SK-N-SH (cell line): ENCODE measurements at regions of chr1 and their contacts with region 1.

Region 1: DNA sequence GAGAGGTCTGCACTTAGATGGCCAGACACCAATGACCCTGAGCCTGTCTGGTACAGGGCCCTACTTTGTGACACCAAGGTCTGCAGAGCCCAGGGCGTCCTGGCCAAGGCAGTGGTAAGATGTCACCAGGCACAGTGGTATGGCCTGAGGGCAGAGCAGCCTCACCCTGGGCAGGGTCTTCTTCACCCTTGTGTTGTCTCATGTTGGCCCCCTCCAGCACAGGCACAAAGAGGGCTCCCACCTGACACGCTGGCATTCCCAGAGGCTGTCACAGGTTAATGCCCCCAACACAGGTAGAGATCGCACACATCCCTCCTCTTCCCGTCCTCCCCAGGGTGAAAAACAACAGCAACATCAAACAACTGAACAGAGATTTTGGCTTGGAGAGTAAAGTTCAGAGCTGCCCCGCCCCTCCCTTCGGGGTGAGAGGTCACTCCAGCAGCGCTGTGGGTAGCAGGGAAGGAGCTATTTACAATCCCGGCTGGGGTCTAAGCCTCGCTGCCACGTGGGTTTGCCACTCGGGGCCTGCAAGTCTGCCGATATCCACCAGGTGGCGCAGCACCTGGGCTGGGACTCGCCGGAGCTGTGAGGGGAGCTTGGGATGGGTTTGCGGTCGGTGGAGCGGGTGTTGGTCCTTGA is 12.6 kb downstream of the EFNA3 start:
- DNase-seq: peak; percentile 88
- H3K4me3 ChIP-seq: peak overlapping the region in 1 of 2 experiments; percentile 23; a peak in 1 of 4 replicates
- H3K27ac ChIP-seq: no peak overlapping the region
- H3K4me1 ChIP-seq: peaks cover 0 to 30% of the 10 kb centered on the region in 2 experiments; a peak in 1 of 4 replicates
- H3K27me3 ChIP-seq: no peaks in the 10 kb centered on the region
- CTCF ChIP-seq: peak; percentile 91
- EP300 ChIP-seq: no peak
- RAD21 ChIP-seq: peak; percentile 78

Region 2: GRCh38 chr1:155044812-155045690 is 46.1 kb before region 1 on chr1:
- CTCF ChIA-PET with region 1: interaction called, 129 read pairs
- POLR2A ChIA-PET with region 1: no interaction called
- DNase-seq: peak; percentile 84
- H3K4me3 ChIP-seq: no peak overlapping the region
- H3K27ac ChIP-seq: no peak overlapping the region; a peak in 1 of 4 replicates
- H3K4me1 ChIP-seq: peaks cover 11 to 27% of the 10 kb centered on the region in 2 experiments; a peak in 3 of 4 replicates
- H3K27me3 ChIP-seq: no peaks in the 10 kb centered on the region
- CTCF ChIP-seq: peak; percentile 81
- EP300 ChIP-seq: no peak
- RAD21 ChIP-seq: peak; percentile 84

Region 3: DNA sequence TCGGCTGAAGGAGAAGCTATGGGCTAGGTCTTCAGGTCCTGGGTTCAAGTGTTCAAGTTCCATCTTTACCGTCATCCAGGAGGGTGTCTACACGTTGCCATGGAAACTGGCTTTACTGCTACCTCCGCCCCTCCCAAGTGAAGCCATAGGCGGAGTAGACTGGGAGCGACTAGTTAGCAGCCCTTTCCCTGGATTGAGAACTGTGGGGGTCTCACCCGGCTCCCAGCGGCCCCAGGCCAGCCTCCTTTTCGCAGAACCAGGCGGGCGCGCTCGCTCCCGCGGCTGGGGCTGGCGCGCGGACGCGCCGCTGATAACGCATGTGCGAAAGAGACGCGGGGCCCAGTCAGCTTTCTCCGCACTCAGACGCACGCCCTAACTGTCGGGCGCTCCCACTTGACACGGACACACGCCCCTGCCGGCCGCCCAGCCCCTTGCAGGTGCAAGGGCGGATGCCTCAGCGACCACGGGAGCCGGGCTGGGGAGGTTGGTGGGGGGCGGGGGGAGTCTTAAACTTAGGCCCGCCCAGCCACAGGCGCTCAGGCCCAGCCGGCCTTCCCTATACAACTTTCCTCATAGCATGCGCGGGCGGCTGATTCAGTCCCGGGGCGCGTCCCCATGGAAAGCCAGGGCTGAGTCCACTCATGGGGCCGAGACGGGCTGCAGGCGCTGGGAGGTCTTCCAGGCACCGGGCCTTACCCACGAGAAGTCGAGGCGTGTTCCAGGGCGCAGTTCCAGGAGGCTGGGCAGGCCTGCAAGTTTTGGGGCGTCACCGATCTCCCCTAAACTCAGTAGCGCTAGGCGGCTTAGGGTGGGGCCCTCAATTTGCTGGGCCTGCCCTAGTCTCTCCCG is 20.2 kb before region 1 on chr1:
- CTCF ChIA-PET with region 1: interaction called, 44 read pairs
- POLR2A ChIA-PET with region 1: interaction called, 3 read pairs
- DNase-seq: peak; percentile 90
- H3K4me3 ChIP-seq: peak overlapping the region in 1 of 2 experiments; percentile 32; a peak in 2 of 4 replicates
- H3K27ac ChIP-seq: peak overlapping the region in 1 of 2 experiments; percentile 51; a peak in 1 of 4 replicates
- H3K4me1 ChIP-seq: peaks cover 0 to 21% of the 10 kb centered on the region in 2 experiments; a peak in 1 of 4 replicates
- H3K27me3 ChIP-seq: no peaks in the 10 kb centered on the region
- CTCF ChIP-seq: peak; percentile 25; the same call in 1 of the 2 replicates
- EP300 ChIP-seq: no peak
- RAD21 ChIP-seq: no peak

Region 4: GRCh38 chr1:155105604-155106022 is 14.4 kb after region 1 on chr1:
- CTCF ChIA-PET with region 1: interaction called, 30 read pairs
- POLR2A ChIA-PET with region 1: no interaction called
- DNase-seq: no peak
- H3K4me3 ChIP-seq: no peak overlapping the region
- H3K27ac ChIP-seq: no peak overlapping the region
- H3K4me1 ChIP-seq: no peaks in the 10 kb centered on the region
- H3K27me3 ChIP-seq: no peaks in the 10 kb centered on the region; the same call in 1 of the 2 replicates
- CTCF ChIP-seq: no peak
- EP300 ChIP-seq: no peak
- RAD21 ChIP-seq: no peak

Region 5: DNA sequence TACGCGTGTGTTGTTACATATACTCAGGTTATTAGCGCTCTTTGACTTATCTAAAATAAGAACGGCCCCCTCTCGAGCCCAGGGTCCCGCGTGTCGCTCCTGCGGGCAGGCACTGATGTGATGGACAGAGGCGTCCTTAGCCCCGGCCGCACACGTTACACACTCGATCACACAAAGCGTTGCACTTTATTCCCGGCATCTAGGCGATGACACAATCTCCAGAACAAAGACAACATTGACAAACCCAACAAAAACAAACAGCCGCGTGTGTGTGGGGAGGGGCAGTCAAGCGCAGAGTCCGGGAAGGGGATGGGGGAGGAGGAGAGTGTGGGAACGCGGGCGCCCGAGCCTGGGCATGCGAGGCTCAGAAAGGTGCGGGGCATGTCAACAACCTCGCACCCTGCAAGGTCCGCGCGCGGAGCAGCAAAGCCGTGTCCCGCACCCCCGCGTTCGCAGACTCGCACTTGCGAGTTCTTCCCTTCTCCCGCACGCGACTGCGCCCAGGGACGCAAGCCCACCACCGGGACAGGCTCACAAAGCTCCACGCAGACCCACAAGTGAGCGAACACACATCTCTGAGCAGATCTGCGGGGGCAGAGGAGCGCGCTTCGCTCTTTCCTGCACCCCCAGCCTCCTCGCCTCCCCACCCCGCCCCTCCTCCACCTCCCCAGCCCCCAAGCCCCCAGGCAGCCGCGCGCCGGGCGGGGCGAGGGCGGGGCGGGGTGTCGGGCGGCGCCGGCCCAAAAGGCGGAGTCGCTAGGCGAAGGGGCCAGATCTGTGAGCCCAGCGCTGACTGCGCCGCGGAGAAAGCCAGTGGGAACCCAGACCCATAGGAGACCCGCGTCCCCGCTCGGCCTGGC is 36.1 kb after region 1 on chr1 and contains the start of gene EFNA1:
- CTCF ChIA-PET with region 1: interaction called, 48 read pairs
- POLR2A ChIA-PET with region 1: interaction called, 6 read pairs
- DNase-seq: peak; percentile 84
- H3K4me3 ChIP-seq: peak within 1 kb of the TSS; percentile 63 to 67
- H3K27ac ChIP-seq: peak within 1 kb of the TSS in 1 of 2 experiments; percentile 77; a peak in 2 of 4 replicates
- H3K4me1 ChIP-seq: peaks cover 19 to 45% of the 10 kb centered on the region in 2 experiments
- H3K27me3 ChIP-seq: no peaks in the 10 kb centered on the region
- CTCF ChIP-seq: no peak
- EP300 ChIP-seq: no peak
- RAD21 ChIP-seq: no peak
- polyA plus RNA-seq, gene EFNA1: 14.4 and 15.3 TPM in 2 replicates

Region 6: GRCh38 chr1:155145491-155145890 is 54.3 kb after region 1 on chr1:
- CTCF ChIA-PET with region 1: interaction called, 25 read pairs
- POLR2A ChIA-PET with region 1: no interaction called
- DNase-seq: no peak
- H3K4me3 ChIP-seq: no peak overlapping the region
- H3K27ac ChIP-seq: no peak overlapping the region
- H3K4me1 ChIP-seq: no peaks in the 10 kb centered on the region; a peak in 1 of 4 replicates
- H3K27me3 ChIP-seq: peaks cover 6% of the 10 kb centered on the region; the same call in 1 of the 2 replicates
- CTCF ChIP-seq: no peak; the same call in 1 of the 2 replicates
- EP300 ChIP-seq: no peak
- RAD21 ChIP-seq: no peak

Region 7: DNA sequence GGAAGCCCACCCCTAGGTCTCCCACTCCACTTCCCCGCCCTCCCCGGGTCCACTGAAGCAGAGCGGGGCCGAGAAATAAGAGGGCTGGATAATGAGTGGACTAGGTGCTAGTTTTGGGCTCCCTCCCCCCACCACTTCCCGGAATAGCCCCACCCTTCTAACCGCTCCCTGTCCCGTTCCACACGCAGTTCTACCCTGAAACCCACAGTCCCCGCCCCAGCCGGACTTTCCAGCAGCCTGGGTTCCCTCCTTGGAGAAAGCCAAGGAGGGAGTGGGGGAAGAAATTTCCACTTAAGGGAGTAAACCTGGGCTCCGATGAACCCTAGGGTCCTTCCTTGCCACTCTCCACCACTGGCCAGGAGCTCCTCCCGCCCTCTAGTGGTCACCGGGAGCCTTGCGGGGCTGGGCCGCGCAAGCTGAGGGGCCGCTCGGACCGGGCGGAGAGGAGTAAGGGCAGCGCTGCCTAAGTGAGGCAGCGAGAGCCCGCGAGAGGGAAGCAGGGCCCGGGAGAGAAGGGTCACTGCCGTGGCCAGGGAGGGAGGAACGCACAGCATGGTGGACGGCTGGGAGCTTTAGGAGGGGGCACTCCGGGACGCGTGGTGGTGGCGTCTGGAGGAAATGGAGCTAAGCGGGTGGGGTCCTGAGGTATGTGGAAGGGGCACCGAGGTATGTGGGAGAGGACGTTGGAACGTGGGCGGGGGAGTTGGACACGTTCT is 102.2 kb after region 1 on chr1:
- CTCF ChIA-PET with region 1: interaction called, 11 read pairs
- POLR2A ChIA-PET with region 1: no interaction called
- DNase-seq: peak; percentile 94
- H3K4me3 ChIP-seq: peak overlapping the region; percentile 30 to 60
- H3K27ac ChIP-seq: peak overlapping the region; percentile 78 to 86
- H3K4me1 ChIP-seq: peaks cover 0 to 24% of the 10 kb centered on the region in 2 experiments; a peak in 2 of 4 replicates
- H3K27me3 ChIP-seq: no peaks in the 10 kb centered on the region
- CTCF ChIP-seq: peak; percentile 97
- EP300 ChIP-seq: no peak
- RAD21 ChIP-seq: peak; percentile 64